Psoas muscle (tissue), 8 donors: ENCODE measurements at regions of chr14 and their contacts with region 1.

Region 1: GRCh38 chr14:61360796-61361525 is 39.6 kb downstream of the PRKCH start:
- DNase-seq: no peak
- ATAC-seq: no peak
- H3K4me3 ChIP-seq: no peak overlapping the region
- H3K27ac ChIP-seq: no peak overlapping the region
- H3K4me1 ChIP-seq: no peaks in the 10 kb centered on the region
- H3K27me3 ChIP-seq: no peaks in the 10 kb centered on the region
- CTCF ChIP-seq: no peak

Region 2: GRCh38 chr14:61308198-61308597 is 52.8 kb before region 1 on chr14:
- intact Hi-C with region 1: loop called in 1 of 2 experiments (anchors 5 kb)
- DNase-seq: no peak
- ATAC-seq: no peak
- H3K4me3 ChIP-seq: no peak overlapping the region
- H3K27ac ChIP-seq: no peak overlapping the region
- H3K4me1 ChIP-seq: no peaks in the 10 kb centered on the region
- H3K27me3 ChIP-seq: no peaks in the 10 kb centered on the region
- CTCF ChIP-seq: no peak